Prostate gland (tissue), 2 donors: ENCODE measurements at regions of chr1 and their contacts with region 1.

Region 1: GRCh38 chr1:230066466-230067404 is at the start of gene GALNT2:
- DNase-seq: peak; percentile 80
- H3K4me3 ChIP-seq: peak within 1 kb of the TSS; percentile 77 to 91
- H3K27ac ChIP-seq: peak within 1 kb of the TSS; percentile 82 to 89
- H3K4me1 ChIP-seq: no peaks in the 10 kb centered on the region
- H3K27me3 ChIP-seq: no peaks in the 10 kb centered on the region
- CTCF ChIP-seq: no peak
- POLR2A ChIP-seq: peak; percentile 84
- total RNA-seq, gene GALNT2: 34.1 to 125 TPM

Region 2: DNA sequence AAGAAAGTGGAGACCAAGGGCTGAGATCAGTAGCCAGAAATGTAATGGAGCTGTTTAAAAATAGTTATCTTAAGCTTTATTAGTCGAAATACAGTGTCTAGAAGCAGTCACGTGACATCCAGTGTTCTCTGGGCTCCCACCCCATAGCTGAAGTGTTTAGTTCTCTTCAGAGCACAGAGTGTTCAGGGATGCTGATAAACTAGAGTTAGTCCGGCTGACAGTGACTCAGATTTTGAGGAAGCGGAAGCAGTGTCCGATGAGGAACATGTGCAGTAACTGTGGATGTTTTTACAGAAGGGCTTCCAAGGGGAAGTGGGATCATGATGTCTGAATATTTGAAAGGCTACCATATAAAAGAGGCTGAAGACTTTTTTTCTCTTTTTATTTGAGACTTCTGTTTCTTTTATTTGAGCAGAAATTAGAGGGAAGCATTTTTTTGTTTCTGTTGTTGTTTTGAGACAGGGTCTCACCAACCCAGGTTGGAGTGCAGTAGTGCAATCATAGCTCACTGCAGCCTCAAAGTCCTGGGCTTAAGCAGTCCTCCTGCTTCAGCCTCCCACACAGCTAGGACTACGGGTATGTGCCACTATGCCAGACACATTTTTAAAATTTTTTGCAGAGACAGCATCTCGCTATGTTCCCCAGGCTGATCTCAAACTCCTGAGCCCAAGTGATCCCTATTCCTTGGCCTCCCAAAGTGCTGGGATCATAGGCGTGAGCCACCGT is 124.5 kb after region 1 on chr1:
- intact Hi-C with region 1: loop called (anchors 5 kb)
- DNase-seq: peak; percentile 49
- H3K4me3 ChIP-seq: no peak overlapping the region
- H3K27ac ChIP-seq: peak overlapping the region; percentile 34 to 45
- H3K4me1 ChIP-seq: no peaks in the 10 kb centered on the region
- H3K27me3 ChIP-seq: no peaks in the 10 kb centered on the region
- CTCF ChIP-seq: no peak
- POLR2A ChIP-seq: no peak

Region 3: GRCh38 chr1:230215031-230215430 is 148.3 kb after region 1 on chr1:
- intact Hi-C with region 1: loop called (anchors 5 kb)
- DNase-seq: no peak
- H3K4me3 ChIP-seq: no peak overlapping the region
- H3K27ac ChIP-seq: peak overlapping the region in 1 of 2 donors; percentile 13
- H3K4me1 ChIP-seq: peaks cover 7% of the 10 kb centered on the region
- H3K27me3 ChIP-seq: no peaks in the 10 kb centered on the region
- CTCF ChIP-seq: peak in 2 of 4 experiments; percentile 23 to 38
- POLR2A ChIP-seq: no peak

Region 4: GRCh38 chr1:230441183-230442029 is 374.7 kb after region 1 on chr1:
- intact Hi-C with region 1: no loop called
- DNase-seq: no peak
- H3K4me3 ChIP-seq: no peak overlapping the region
- H3K27ac ChIP-seq: no peak overlapping the region
- H3K4me1 ChIP-seq: no peaks in the 10 kb centered on the region
- H3K27me3 ChIP-seq: no peaks in the 10 kb centered on the region
- CTCF ChIP-seq: no peak
- POLR2A ChIP-seq: no peak

Region 5: GRCh38 chr1:230713915-230714764 is 647.4 kb after region 1 on chr1 and contains the start of gene AGT:
- intact Hi-C with region 1: no loop called
- DNase-seq: peak; percentile 71
- H3K4me3 ChIP-seq: no peak within 1 kb of the TSS
- H3K27ac ChIP-seq: peak within 1 kb of the TSS in 1 of 2 donors; percentile 2
- H3K4me1 ChIP-seq: no peaks in the 10 kb centered on the region
- H3K27me3 ChIP-seq: no peaks in the 10 kb centered on the region
- CTCF ChIP-seq: no peak
- POLR2A ChIP-seq: no peak
- total RNA-seq, gene AGT: 4.7 to 12.0 TPM

Region 6: DNA sequence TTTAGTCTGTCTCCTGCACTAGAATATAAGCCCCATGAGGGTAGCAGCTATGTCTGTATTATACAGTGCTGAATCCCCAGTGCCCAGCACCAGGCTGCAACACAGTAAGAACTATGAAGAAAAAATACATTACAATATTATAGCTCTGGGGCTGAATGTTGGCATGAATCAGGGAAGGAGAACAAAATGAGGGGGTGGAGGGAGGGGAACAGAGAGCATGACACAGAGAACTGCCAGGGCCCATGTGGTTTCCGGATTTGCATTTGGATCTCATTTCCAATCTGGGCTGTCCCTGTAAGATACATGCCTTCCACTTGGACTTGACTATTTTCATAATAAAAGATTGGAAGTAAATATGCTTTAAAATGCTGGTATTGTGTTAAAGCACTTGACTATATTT is 765.7 kb after region 1 on chr1:
- intact Hi-C with region 1: no loop called
- DNase-seq: no peak
- H3K4me3 ChIP-seq: no peak overlapping the region
- H3K27ac ChIP-seq: no peak overlapping the region
- H3K4me1 ChIP-seq: no peaks in the 10 kb centered on the region
- H3K27me3 ChIP-seq: no peaks in the 10 kb centered on the region
- CTCF ChIP-seq: no peak
- POLR2A ChIP-seq: no peak